ENCODE measurements at regions of chr18 and their contacts with region 1.

Region 1: DNA sequence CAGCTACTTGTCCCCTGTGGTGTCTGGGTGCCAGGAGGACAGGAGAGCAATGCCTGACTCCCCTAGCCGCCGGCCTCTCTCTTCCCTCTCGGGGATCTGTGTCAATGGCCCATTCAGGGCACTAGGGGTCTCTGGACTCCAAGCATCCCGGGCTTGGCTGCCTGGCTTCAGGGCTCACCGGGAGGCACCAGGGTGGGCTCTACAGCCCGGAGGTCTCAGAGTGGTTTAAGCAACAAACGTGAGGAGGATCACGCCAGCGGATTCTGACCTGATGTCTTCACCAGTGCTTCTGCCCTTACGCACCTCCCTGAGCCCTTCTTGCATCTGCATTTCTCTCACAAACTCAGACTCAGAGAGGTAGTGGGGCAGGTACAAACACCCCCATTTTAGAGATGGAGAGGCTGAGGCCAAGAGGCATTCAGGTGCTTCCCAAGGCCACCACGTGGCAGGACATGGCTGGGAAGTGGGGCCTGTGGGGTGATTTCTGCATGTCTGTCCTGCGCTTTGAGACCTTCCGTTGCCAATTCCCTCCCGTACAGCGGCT is 243.0 kb downstream of the CELF4 start:
- DNase-seq: peak; percentile 82
- H3K4me3 ChIP-seq: peak overlapping the region in 1 of 2 experiments; percentile 27; a peak in 1 of 4 replicates
- H3K27ac ChIP-seq: no peak overlapping the region
- H3K4me1 ChIP-seq: peaks cover 0 to 18% of the 10 kb centered on the region in 2 experiments; a peak in 1 of 4 replicates
- H3K27me3 ChIP-seq: no peaks in the 10 kb centered on the region
- CTCF ChIP-seq: peak; percentile 83
- EP300 ChIP-seq: no peak
- RAD21 ChIP-seq: peak; percentile 83

Region 2: GRCh38 chr18:37289423-37289822 is 33.1 kb before region 1 on chr18:
- CTCF ChIA-PET with region 1: interaction called, 10 read pairs
- POLR2A ChIA-PET with region 1: no interaction called
- DNase-seq: no peak
- H3K4me3 ChIP-seq: no peak overlapping the region
- H3K27ac ChIP-seq: no peak overlapping the region
- H3K4me1 ChIP-seq: peaks cover 0 to 10% of the 10 kb centered on the region in 2 experiments; a peak in 1 of 4 replicates
- H3K27me3 ChIP-seq: no peaks in the 10 kb centered on the region; the same call in 1 of the 2 replicates
- CTCF ChIP-seq: no peak
- EP300 ChIP-seq: no peak
- RAD21 ChIP-seq: no peak

Region 3: GRCh38 chr18:37335409-37335736 is 12.8 kb after region 1 on chr18:
- CTCF ChIA-PET with region 1: interaction called, 66 read pairs
- POLR2A ChIA-PET with region 1: no interaction called
- DNase-seq: peak; percentile 87
- H3K4me3 ChIP-seq: no peak overlapping the region; a peak in 1 of 4 replicates
- H3K27ac ChIP-seq: peak overlapping the region in 1 of 2 experiments; percentile 91; a peak in 2 of 4 replicates
- H3K4me1 ChIP-seq: peaks cover 7 to 54% of the 10 kb centered on the region in 2 experiments; a peak in 2 of 4 replicates
- H3K27me3 ChIP-seq: no peaks in the 10 kb centered on the region
- CTCF ChIP-seq: peak; percentile 54
- EP300 ChIP-seq: no peak
- RAD21 ChIP-seq: peak; percentile 78

Measured in SK-N-SH (cell line).